Heart right ventricle (tissue), 16 donors: ENCODE measurements at regions of chr17 and their contacts with region 1.

Region 1: GRCh38 chr17:77076124-77076872 is 64.5 kb upstream of the SEC14L1 start:
- DNase-seq: no peak
- ATAC-seq: peak in 2 of 8 donors; percentile 52 to 61
- H3K4me3 ChIP-seq: no peak overlapping the region
- H3K27ac ChIP-seq: no peak overlapping the region
- H3K4me1 ChIP-seq: peaks cover 0 to 8% (median 0%) of the 10 kb centered on the region in 9 donors
- H3K27me3 ChIP-seq: peaks cover 0 to 56% (median 22%) of the 10 kb centered on the region in 7 donors
- CTCF ChIP-seq: no peak

Region 2: GRCh38 chr17:77494664-77495435 is 418.6 kb after region 1 on chr17:
- intact Hi-C with region 1: loop called in 2 of 10 experiments (anchors 10 kb)
- DNase-seq: peak; percentile 74 to 82
- ATAC-seq: peak; percentile 55 to 82 (median 72)
- H3K4me3 ChIP-seq: no peak overlapping the region
- H3K27ac ChIP-seq: peak overlapping the region in 1 of 10 donors; percentile 40
- H3K4me1 ChIP-seq: peaks cover 9 to 28% (median 18%) of the 10 kb centered on the region in 9 donors
- H3K27me3 ChIP-seq: no peaks in the 10 kb centered on the region
- CTCF ChIP-seq: peak; percentile 95 to 100 (median 98)